ENCODE measurements at regions of chr12 and their contacts with region 1.

Region 1: DNA sequence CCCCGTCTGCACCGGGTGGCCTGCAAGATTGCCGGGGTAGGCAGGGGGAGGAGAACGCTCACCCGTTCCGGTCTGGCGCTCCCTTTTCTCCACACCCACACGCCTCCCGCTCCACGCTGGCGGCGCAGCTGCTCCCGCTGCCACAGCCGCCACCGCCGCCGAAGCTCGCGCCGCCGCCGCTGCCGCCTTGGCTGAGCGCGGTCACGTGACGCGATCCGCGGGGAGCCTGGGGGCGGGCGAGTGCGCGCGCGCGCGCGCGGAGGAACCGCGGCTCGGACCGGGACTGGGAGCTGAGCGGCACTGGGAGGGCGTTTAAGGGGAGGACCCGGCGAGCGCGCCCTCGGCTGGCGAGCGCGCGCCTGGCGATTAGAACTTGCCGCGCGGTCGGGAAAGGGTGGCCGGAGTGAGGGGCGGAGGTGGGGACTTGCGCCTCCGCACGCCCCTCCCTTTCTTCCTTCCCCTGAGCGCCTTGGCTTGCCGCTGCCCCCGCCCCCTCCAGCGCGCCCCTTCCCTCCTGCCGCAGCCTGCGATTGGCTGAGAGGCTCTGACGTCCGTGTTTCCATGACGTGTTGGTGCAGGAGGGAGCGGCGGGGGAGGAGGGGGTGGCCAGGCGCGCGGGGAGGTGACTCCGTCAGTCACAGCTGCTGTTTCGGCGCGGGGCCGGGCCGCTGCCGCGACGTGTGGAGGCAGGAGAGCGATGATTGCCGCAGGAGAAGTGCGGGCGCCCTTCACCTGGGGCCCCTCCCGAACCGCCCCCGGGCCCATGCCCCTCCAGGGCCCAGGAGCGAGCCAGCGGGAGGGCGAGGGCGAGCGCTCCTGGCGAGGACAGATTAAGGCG is 738 bp upstream of the ATP2B1 start:
- DNase-seq: peak; percentile 94 to 99 (median 97)
- ATAC-seq: peak; percentile 85
- H3K4me3 ChIP-seq: peak overlapping the region; percentile 90
- H3K4me3 Mint-ChIP-seq: peak overlapping the region; percentile 89 to 99 (median 93)
- H3K27ac ChIP-seq: peak overlapping the region; percentile 92
- H3K27ac Mint-ChIP-seq: peak overlapping the region; percentile 85 to 100 (median 95)
- H3K4me1 ChIP-seq: peaks cover 11 to 21% of the 10 kb centered on the region in 2 donors
- H3K4me1 Mint-ChIP-seq: peaks cover 17 to 42% (median 37%) of the 10 kb centered on the region in 7 donors
- H3K27me3 ChIP-seq: no peaks in the 10 kb centered on the region
- H3K27me3 Mint-ChIP-seq: peaks cover 0 to 54% (median 0%) of the 10 kb centered on the region in 5 donors

Region 2: DNA sequence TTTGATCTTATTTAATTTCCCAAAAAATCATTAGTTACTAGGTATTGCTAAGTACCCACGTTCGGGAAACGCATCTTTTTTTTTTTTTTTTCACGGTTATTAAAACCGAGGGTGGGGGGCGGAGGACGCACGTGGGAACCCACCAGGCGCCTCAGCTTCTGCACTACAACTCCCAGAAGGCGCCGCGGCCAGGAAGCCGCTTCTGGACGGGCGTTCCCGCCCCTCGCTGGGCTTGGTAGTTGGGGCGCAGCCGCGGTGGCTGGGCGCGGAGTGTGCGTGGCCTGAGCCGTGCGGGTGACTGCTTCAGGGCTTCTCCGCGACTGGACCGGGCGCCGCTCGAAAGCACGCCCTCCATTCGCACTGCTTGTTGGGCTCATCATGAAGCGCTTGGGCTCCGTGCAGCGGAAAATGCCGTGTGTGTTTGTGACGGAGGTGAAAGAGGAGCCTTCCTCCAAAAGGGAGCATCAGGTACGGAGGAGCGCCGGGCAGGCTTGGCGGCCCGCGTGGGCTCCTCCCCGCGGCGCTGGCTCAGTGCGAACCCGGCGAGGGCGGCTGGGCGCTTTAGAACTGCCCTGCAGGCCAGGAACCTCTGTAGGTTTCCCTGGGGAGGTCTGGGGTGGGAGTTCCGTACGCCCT is 1674.0 kb before region 1 on chr12:
- CTCF ChIA-PET with region 1: no interaction called
- POLR2A ChIA-PET with region 1: no interaction called
- intact Hi-C with region 1: loop called (anchors 1 kb)
- DNase-seq: peak; percentile 75 to 89 (median 85)
- ATAC-seq: peak; percentile 99
- H3K4me3 ChIP-seq: peak overlapping the region; percentile 89
- H3K4me3 Mint-ChIP-seq: peak overlapping the region; percentile 92 to 99 (median 96)
- H3K27ac ChIP-seq: peak overlapping the region; percentile 81
- H3K27ac Mint-ChIP-seq: peak overlapping the region; percentile 86 to 98 (median 92)
- H3K4me1 ChIP-seq: peaks cover 14 to 19% of the 10 kb centered on the region in 2 donors
- H3K4me1 Mint-ChIP-seq: peaks cover 22 to 64% (median 53%) of the 10 kb centered on the region in 7 donors
- H3K27me3 ChIP-seq: no peaks in the 10 kb centered on the region
- H3K27me3 Mint-ChIP-seq: no peaks in the 10 kb centered on the region

Region 3: GRCh38 chr12:89040146-89040964 is 669.0 kb before region 1 on chr12:
- CTCF ChIA-PET with region 1: no interaction called
- POLR2A ChIA-PET with region 1: no interaction called
- intact Hi-C with region 1: loop called in 1 of 2 experiments (anchors 5 kb)
- DNase-seq: peak; percentile 13 to 76 (median 43)
- ATAC-seq: peak; percentile 93
- H3K4me3 ChIP-seq: no peak overlapping the region
- H3K4me3 Mint-ChIP-seq: peak overlapping the region; percentile 29 to 77 (median 54)
- H3K27ac ChIP-seq: no peak overlapping the region
- H3K27ac Mint-ChIP-seq: peak overlapping the region; percentile 1 to 88 (median 68)
- H3K4me1 ChIP-seq: peaks cover 7 to 12% of the 10 kb centered on the region in 2 donors
- H3K4me1 Mint-ChIP-seq: peaks cover 21 to 60% (median 31%) of the 10 kb centered on the region in 7 donors
- H3K27me3 ChIP-seq: no peaks in the 10 kb centered on the region
- H3K27me3 Mint-ChIP-seq: no peaks in the 10 kb centered on the region

Region 4: GRCh38 chr12:89470741-89471509 is 238.5 kb before region 1 on chr12:
- CTCF ChIA-PET with region 1: no interaction called
- POLR2A ChIA-PET with region 1: no interaction called
- intact Hi-C with region 1: loop called (anchors 5 kb)
- DNase-seq: peak in 6 of 9 donors; percentile 28 to 56 (median 46)
- ATAC-seq: peak; percentile 86
- H3K4me3 ChIP-seq: no peak overlapping the region
- H3K4me3 Mint-ChIP-seq: peak overlapping the region in 1 of 10 donors; percentile 35
- H3K27ac ChIP-seq: no peak overlapping the region
- H3K27ac Mint-ChIP-seq: peak overlapping the region in 5 of 9 donors; percentile 12 to 85 (median 48)
- H3K4me1 ChIP-seq: peaks cover 23 to 31% of the 10 kb centered on the region in 2 donors
- H3K4me1 Mint-ChIP-seq: peaks cover 26 to 63% (median 44%) of the 10 kb centered on the region in 7 donors
- H3K27me3 ChIP-seq: no peaks in the 10 kb centered on the region
- H3K27me3 Mint-ChIP-seq: no peaks in the 10 kb centered on the region

Region 5: DNA sequence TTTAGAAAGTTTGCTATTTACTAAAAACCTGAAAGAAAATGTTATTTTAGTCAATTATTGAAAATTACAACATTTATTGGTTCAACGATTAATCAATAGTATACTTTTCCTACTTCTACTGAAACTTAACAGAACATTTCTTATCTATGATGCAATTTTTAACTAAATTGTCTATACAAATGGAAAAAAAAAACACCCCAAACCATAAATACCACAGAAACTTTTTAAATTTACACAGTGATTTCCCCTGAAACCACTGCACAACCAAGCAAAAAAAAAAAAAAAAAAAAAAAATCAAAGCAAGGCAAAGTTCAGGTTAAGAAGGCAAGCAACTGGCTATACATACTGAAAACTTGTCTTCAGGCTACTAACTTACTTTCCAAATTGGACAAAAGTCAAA is 111.6 kb before region 1 on chr12:
- CTCF ChIA-PET with region 1: no interaction called
- POLR2A ChIA-PET with region 1: no interaction called
- intact Hi-C with region 1: loop called in 1 of 2 experiments (anchors 5 kb)
- DNase-seq: no peak
- ATAC-seq: no peak
- H3K4me3 ChIP-seq: no peak overlapping the region
- H3K4me3 Mint-ChIP-seq: no peak overlapping the region
- H3K27ac ChIP-seq: no peak overlapping the region
- H3K27ac Mint-ChIP-seq: peak overlapping the region in 2 of 9 donors; percentile 51 to 63
- H3K4me1 ChIP-seq: no peaks in the 10 kb centered on the region
- H3K4me1 Mint-ChIP-seq: peaks cover 4 to 15% (median 12%) of the 10 kb centered on the region in 7 donors
- H3K27me3 ChIP-seq: no peaks in the 10 kb centered on the region
- H3K27me3 Mint-ChIP-seq: peaks cover 0 to 8% (median 0%) of the 10 kb centered on the region in 5 donors

Region 6: DNA sequence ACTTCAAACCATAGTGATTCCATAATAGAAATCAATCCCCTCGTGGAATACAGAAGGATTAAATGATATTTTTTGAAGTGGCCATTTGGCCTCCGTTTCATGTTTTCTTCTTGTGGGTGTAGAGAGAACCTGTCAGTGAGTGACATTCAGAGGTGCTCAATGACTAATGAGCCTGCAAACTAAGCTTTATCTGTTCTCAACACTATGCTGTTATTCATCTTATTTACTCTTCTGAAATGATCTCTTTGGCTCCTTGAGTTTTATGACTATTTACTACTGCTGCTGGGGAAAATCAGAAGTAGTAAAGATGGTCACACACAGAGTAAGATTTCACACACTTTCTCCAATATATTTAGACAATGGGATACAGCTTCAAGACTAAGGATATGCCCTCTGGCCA is 31.2 kb before region 1 on chr12:
- CTCF ChIA-PET with region 1: no interaction called
- POLR2A ChIA-PET with region 1: no interaction called
- intact Hi-C with region 1: no loop called
- DNase-seq: no peak
- ATAC-seq: peak; percentile 18
- H3K4me3 ChIP-seq: no peak overlapping the region
- H3K4me3 Mint-ChIP-seq: peak overlapping the region in 2 of 10 donors; percentile 9 to 25
- H3K27ac ChIP-seq: no peak overlapping the region
- H3K27ac Mint-ChIP-seq: peak overlapping the region in 1 of 9 donors; percentile 24
- H3K4me1 ChIP-seq: peaks cover 5 to 12% of the 10 kb centered on the region in 2 donors
- H3K4me1 Mint-ChIP-seq: peaks cover 6 to 85% (median 61%) of the 10 kb centered on the region in 7 donors
- H3K27me3 ChIP-seq: no peaks in the 10 kb centered on the region
- H3K27me3 Mint-ChIP-seq: no peaks in the 10 kb centered on the region

Region 7: DNA sequence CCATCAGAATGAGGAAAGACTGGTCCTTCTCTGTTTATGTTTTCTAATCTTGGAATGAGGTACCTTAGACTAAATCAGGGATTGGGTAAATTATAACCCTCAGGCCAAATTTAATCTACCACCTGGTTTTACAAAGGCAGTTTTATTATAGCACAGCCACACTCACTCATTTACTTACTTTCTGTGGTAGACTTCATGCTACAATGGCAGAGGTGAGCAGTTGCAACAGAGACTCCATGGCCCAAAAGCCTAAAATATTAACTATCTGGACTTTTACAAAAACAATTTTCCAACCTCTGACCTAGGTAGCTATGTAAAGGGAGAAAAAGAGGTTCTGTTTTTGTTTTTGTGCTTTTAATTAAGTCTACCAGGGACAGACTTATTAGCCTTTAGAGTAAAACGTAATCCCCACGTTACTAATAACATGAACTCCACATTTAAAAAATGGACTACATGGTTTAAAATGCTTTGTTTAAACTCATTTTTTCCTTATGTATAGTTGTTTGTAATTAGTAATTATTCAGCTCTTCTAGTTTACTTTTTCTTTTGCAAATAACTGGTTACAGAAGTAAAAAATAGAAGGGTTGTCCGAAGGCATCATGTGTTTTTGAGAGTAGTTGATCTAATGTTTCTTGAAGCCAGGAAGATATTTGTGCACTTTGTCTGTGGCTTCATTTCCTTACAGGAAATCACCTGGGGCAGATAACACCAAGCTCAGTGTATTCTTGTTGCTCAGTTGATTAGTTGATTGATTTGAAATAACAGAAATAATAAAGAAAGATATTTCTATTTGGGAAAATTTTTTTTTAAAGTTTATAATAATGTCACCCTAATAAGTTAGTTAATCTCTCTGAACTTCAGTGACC is 56.8 kb after region 1 on chr12:
- CTCF ChIA-PET with region 1: interaction called, 4 read pairs
- POLR2A ChIA-PET with region 1: interaction called, 4 read pairs
- intact Hi-C with region 1: loop called in 1 of 2 experiments (anchors 2 kb)
- DNase-seq: peak in 2 of 9 donors; percentile 14 to 21
- ATAC-seq: no peak
- H3K4me3 ChIP-seq: peak overlapping the region; percentile 1
- H3K4me3 Mint-ChIP-seq: peak overlapping the region in 5 of 10 donors; percentile 21 to 66 (median 43)
- H3K27ac ChIP-seq: no peak overlapping the region
- H3K27ac Mint-ChIP-seq: peak overlapping the region in 7 of 9 donors; percentile 43 to 79 (median 59)
- H3K4me1 ChIP-seq: peaks cover 8 to 25% of the 10 kb centered on the region in 2 donors
- H3K4me1 Mint-ChIP-seq: peaks cover 5 to 29% (median 17%) of the 10 kb centered on the region in 7 donors
- H3K27me3 ChIP-seq: no peaks in the 10 kb centered on the region
- H3K27me3 Mint-ChIP-seq: no peaks in the 10 kb centered on the region

Region 8: DNA sequence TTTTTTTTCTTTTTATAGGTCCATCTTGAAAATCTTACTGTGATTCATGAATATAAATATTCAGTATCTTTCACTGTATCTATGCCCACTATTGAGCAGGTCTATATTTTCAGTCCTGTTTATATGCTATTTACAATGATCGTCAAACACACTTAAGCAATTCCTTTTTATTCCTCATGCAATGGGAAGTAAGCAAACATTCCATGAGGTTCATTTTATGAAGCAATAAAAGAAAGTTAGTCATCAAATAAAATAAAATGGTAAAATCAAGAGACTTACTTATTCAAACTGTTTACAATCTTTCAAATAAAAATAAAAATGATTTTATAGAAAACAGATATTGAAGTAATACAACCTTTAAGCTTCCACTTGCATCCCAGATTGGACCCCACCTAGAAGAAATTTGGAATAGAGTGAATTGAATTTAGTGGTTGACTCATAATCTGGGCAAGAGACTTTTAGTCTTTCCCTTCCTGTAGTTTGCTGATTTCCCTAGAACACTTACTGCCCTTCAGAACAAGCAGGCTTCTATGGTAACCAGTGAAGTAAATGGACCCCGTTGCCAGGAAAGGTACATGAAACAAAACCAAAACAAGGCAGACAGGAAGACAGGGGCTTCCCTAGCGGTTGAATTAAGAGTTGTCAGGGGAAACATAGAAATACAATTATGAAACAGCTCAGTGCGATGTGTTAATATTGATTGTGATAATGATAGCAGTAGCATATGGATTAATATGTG is 240.2 kb after region 1 on chr12:
- CTCF ChIA-PET with region 1: interaction called, 4 read pairs
- POLR2A ChIA-PET with region 1: interaction called, 9 read pairs
- intact Hi-C with region 1: loop called (anchors 1 kb)
- DNase-seq: peak in 7 of 9 donors; percentile 66 to 89 (median 81)
- ATAC-seq: peak; percentile 95
- H3K4me3 ChIP-seq: peak overlapping the region; percentile 2
- H3K4me3 Mint-ChIP-seq: peak overlapping the region in 9 of 10 donors; percentile 1 to 76 (median 64)
- H3K27ac ChIP-seq: peak overlapping the region; percentile 53
- H3K27ac Mint-ChIP-seq: peak overlapping the region in 8 of 9 donors; percentile 62 to 89 (median 76)
- H3K4me1 ChIP-seq: peaks cover 24 to 33% of the 10 kb centered on the region in 2 donors
- H3K4me1 Mint-ChIP-seq: peaks cover 20 to 58% (median 44%) of the 10 kb centered on the region in 7 donors
- H3K27me3 ChIP-seq: no peaks in the 10 kb centered on the region
- H3K27me3 Mint-ChIP-seq: no peaks in the 10 kb centered on the region